ENCODE measurements at regions of chr2 and their contacts with region 1.

Region 1: DNA sequence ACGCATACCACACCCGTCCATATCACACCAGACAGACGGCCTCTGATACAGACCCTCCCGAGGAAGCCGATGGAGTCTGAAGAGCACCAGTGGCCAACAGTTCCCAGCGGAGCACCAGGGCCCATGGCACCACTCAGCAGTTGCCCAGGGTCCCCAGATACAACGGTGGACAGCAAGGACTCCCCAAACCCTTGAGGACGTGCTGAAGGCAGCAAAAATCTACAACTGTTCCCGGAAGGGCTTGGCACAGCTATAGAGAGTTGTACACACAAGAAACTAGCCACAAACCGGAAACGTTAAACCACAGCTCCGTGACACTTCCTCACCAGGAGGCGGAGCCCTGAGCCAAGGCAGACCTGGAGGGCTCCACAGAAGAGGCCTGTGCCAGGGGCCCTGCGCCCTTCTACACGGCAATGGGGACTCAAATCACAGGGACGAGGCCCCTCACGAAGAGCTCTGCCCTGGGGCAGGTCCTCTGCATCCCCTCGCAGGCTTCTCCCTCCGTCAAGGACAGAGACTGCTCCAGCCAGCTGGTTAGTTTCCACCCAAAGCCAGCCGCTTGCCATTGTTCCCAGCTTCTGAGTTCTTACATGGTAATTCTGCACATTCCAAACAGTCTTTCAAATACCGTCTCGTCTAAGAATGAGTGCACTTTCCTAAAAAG is 133.4 kb downstream of the HDAC4 start:
- DNase-seq: peak; percentile 91
- H3K4me3 Mint-ChIP-seq: peak overlapping the region; percentile 12
- H3K27ac Mint-ChIP-seq: peak overlapping the region; percentile 46
- H3K4me1 Mint-ChIP-seq: peaks cover 40% of the 10 kb centered on the region
- H3K27me3 Mint-ChIP-seq: no peaks in the 10 kb centered on the region
- CTCF ChIP-seq: peak; percentile 35

Region 2: GRCh38 chr2:239660390-239661230 is 393.2 kb after region 1 on chr2:
- CTCF ChIA-PET with region 1: interaction called, 3 read pairs
- POLR2A ChIA-PET with region 1: no interaction called
- intact Hi-C with region 1: loop called (anchors 10 kb)
- DNase-seq: peak; percentile 87
- H3K4me3 Mint-ChIP-seq: no peak overlapping the region
- H3K27ac Mint-ChIP-seq: no peak overlapping the region
- H3K4me1 Mint-ChIP-seq: peaks cover 12% of the 10 kb centered on the region
- H3K27me3 Mint-ChIP-seq: peaks cover 81% of the 10 kb centered on the region
- CTCF ChIP-seq: no peak